CD8-positive, alpha-beta T cell (primary cell): ENCODE measurements at regions of chr18 and their contacts with region 1.

Region 1: DNA sequence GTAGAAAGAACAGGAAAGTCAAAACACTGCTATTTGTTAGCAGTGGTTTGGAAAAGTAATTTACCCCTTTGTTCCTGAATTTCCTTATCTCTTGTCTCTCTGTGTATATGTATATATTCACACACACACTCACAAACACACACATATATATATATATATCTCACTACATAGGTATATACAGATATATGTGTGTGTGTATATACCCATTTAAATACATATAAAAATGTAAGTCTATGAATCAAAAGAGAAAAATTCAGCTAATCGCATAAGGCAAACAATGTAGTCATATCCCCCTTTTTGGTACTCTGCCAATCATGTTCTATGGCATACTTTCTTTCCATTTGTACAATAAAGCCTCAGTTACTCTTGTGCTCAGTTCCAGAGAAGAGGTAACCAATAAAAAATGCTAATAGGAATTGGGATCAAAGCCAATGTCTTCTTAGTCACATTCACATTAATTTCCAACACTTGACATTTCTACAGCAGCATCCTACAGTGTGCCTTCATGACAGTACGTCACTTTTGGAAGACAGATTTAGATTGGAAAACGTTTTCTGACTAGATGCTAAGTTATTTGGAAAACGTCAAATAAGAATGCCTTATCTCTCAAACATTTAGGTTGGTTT is 94.6 kb downstream of the MC4R start:
- DNase-seq: no peak
- ATAC-seq: no peak
- H3K4me3 ChIP-seq: no peak overlapping the region
- H3K4me3 Mint-ChIP-seq: no peak overlapping the region
- H3K27ac ChIP-seq: no peak overlapping the region
- H3K27ac Mint-ChIP-seq: no peak overlapping the region
- H3K4me1 ChIP-seq: no peaks in the 10 kb centered on the region
- H3K4me1 Mint-ChIP-seq: no peaks in the 10 kb centered on the region
- H3K27me3 ChIP-seq: no peaks in the 10 kb centered on the region
- H3K27me3 Mint-ChIP-seq: no peaks in the 10 kb centered on the region
- CTCF ChIP-seq: no peak

Region 2: DNA sequence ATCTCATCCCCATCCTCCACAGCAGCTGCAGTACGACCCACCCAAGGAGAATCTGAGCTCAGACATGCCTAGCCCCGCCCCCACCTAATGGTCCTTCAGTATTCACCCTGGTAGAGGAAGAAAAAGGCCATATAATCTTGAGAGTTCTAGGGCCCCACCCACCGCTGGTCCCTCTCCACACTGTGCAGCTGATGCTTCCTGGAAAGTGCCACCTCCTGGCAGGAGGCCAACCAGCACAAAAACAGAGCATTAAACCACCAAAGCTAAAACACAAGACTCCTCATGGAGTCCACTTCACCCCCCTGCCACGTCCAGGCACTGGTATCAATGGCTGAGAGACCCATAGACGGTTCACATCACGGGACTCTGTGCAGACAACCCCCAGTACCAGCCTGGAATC is 53.9 kb after region 1 on chr18:
- CTCF ChIA-PET with region 1: no interaction called
- POLR2A ChIA-PET with region 1: no interaction called
- intact Hi-C with region 1: loop called in 1 of 2 experiments (anchors 10 kb)
- DNase-seq: no peak
- ATAC-seq: no peak
- H3K4me3 ChIP-seq: no peak overlapping the region
- H3K4me3 Mint-ChIP-seq: no peak overlapping the region
- H3K27ac ChIP-seq: no peak overlapping the region
- H3K27ac Mint-ChIP-seq: no peak overlapping the region
- H3K4me1 ChIP-seq: no peaks in the 10 kb centered on the region
- H3K4me1 Mint-ChIP-seq: no peaks in the 10 kb centered on the region
- H3K27me3 ChIP-seq: no peaks in the 10 kb centered on the region
- H3K27me3 Mint-ChIP-seq: no peaks in the 10 kb centered on the region
- CTCF ChIP-seq: no peak

Region 3: GRCh38 chr18:60377778-60378469 is 100.0 kb after region 1 on chr18:
- CTCF ChIA-PET with region 1: no interaction called
- POLR2A ChIA-PET with region 1: no interaction called
- intact Hi-C with region 1: no loop called
- DNase-seq: no peak
- ATAC-seq: no peak
- H3K4me3 ChIP-seq: no peak overlapping the region
- H3K4me3 Mint-ChIP-seq: no peak overlapping the region
- H3K27ac ChIP-seq: no peak overlapping the region
- H3K27ac Mint-ChIP-seq: no peak overlapping the region
- H3K4me1 ChIP-seq: no peaks in the 10 kb centered on the region
- H3K4me1 Mint-ChIP-seq: no peaks in the 10 kb centered on the region
- H3K27me3 ChIP-seq: no peaks in the 10 kb centered on the region
- H3K27me3 Mint-ChIP-seq: no peaks in the 10 kb centered on the region
- CTCF ChIP-seq: no peak